Ovary (tissue), 10 donors: ENCODE measurements at regions of chr6 and their contacts with region 1.

Region 1: GRCh38 chr6:42453031-42453653 is 1.4 kb upstream of the TRERF1 start:
- DNase-seq: peak; percentile 87 to 91 (median 90)
- H3K4me3 ChIP-seq: peak overlapping the region; percentile 85
- H3K27ac ChIP-seq: peak overlapping the region; percentile 49 to 72
- H3K4me1 ChIP-seq: no peaks in the 10 kb centered on the region
- H3K27me3 ChIP-seq: no peaks in the 10 kb centered on the region
- CTCF ChIP-seq: peak in 1 of 3 donors; percentile 7
- EP300 ChIP-seq: no peak
- POLR2A ChIP-seq: peak; percentile 62

Region 2: DNA sequence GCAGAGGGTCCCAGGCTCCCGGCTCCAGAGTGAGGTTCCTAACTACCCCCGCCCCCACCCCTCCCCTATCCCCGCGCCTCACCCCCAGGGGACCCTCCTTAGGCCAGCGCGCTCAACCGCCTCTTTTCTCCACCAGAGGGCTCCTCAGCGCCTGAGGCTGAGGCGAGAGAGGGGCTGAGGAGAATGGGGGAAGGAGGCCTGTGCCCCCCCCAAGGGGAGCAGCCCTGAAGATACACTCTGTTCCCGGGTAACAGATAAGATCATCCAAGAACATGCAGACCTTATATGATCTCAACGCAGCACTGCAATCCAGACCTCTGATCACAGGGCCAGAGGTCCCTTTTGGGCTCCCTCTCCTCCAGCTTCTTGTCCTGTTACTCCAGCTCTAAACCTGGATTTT is 192.2 kb before region 1 on chr6:
- intact Hi-C with region 1: loop called in 1 of 4 experiments (anchors 5 kb)
- DNase-seq: peak in 3 of 5 donors; percentile 41 to 67 (median 46)
- H3K4me3 ChIP-seq: no peak overlapping the region
- H3K27ac ChIP-seq: no peak overlapping the region
- H3K4me1 ChIP-seq: peaks cover 9% of the 10 kb centered on the region
- H3K27me3 ChIP-seq: no peaks in the 10 kb centered on the region
- CTCF ChIP-seq: no peak
- EP300 ChIP-seq: no peak
- POLR2A ChIP-seq: no peak

Region 3: GRCh38 chr6:42279144-42279781 is 173.9 kb before region 1 on chr6:
- intact Hi-C with region 1: loop called in 1 of 4 experiments (anchors 10 kb)
- DNase-seq: peak; percentile 43 to 70 (median 61)
- H3K4me3 ChIP-seq: no peak overlapping the region
- H3K27ac ChIP-seq: peak overlapping the region in 1 of 2 donors; percentile 29
- H3K4me1 ChIP-seq: peaks cover 25% of the 10 kb centered on the region
- H3K27me3 ChIP-seq: no peaks in the 10 kb centered on the region
- CTCF ChIP-seq: no peak
- EP300 ChIP-seq: no peak
- POLR2A ChIP-seq: no peak

Region 4: DNA sequence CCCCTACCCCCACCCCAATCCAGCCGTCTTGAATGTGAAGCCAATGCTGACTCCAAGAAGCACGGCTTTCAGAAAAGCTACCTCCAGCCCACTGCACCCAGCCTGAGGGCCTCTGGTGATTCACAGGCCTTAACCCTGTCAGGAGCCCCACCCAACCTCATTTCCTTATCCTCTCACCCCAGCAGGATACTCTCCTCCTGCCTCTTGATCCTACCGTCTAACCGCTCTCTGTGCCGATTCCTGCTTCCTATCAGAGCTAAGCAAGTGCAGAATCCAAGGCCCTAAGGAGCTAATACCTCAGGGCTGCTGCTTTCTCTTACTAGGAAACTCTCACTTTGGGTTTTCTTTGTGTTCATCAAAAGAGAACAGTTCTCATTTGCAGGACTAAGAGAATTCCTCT is 48.7 kb before region 1 on chr6:
- intact Hi-C with region 1: loop called in 1 of 4 experiments (anchors 2 kb)
- DNase-seq: peak in 2 of 5 donors; percentile 26 to 44
- H3K4me3 ChIP-seq: no peak overlapping the region
- H3K27ac ChIP-seq: no peak overlapping the region
- H3K4me1 ChIP-seq: peaks cover 7% of the 10 kb centered on the region
- H3K27me3 ChIP-seq: no peaks in the 10 kb centered on the region
- CTCF ChIP-seq: no peak
- EP300 ChIP-seq: no peak
- POLR2A ChIP-seq: no peak

Region 5: GRCh38 chr6:42532038-42532669 is 79.0 kb after region 1 on chr6:
- intact Hi-C with region 1: loop called in 1 of 4 experiments (anchors 10 kb)
- DNase-seq: peak in 1 of 5 donors; percentile 31
- H3K4me3 ChIP-seq: no peak overlapping the region
- H3K27ac ChIP-seq: no peak overlapping the region
- H3K4me1 ChIP-seq: no peaks in the 10 kb centered on the region
- H3K27me3 ChIP-seq: no peaks in the 10 kb centered on the region
- CTCF ChIP-seq: peak; percentile 66 to 82 (median 82)
- EP300 ChIP-seq: no peak
- POLR2A ChIP-seq: no peak

Region 6: GRCh38 chr6:42547407-42548329 is 94.5 kb after region 1 on chr6:
- intact Hi-C with region 1: loop called in 1 of 4 experiments (anchors 5 kb)
- DNase-seq: peak; percentile 74 to 89 (median 81)
- H3K4me3 ChIP-seq: peak overlapping the region; percentile 31
- H3K27ac ChIP-seq: no peak overlapping the region
- H3K4me1 ChIP-seq: peaks cover 2% of the 10 kb centered on the region
- H3K27me3 ChIP-seq: no peaks in the 10 kb centered on the region
- CTCF ChIP-seq: peak; percentile 84 to 91 (median 89)
- EP300 ChIP-seq: no peak
- POLR2A ChIP-seq: peak; percentile 17